Activated CD4-positive, alpha-beta memory T cell treated with anti-CD3 and anti-CD28 coated beads for 36 hours (primary cell): ENCODE measurements at regions of chr2 and their contacts with region 1.

Region 1: GRCh38 chr2:143110758-143111428 is 18.3 kb upstream of the ARHGAP15 start:
- DNase-seq: peak; percentile 70
- H3K4me3 Mint-ChIP-seq: peak overlapping the region; percentile 56
- H3K27ac Mint-ChIP-seq: peak overlapping the region; percentile 86
- H3K4me1 Mint-ChIP-seq: peaks cover 31% of the 10 kb centered on the region
- H3K27me3 Mint-ChIP-seq: no peaks in the 10 kb centered on the region

Region 2: GRCh38 chr2:143034292-143035074 is 76.4 kb before region 1 on chr2:
- CTCF ChIA-PET with region 1: interaction called, 23 read pairs
- POLR2A ChIA-PET with region 1: no interaction called
- intact Hi-C with region 1: loop called (anchors 1 kb)
- DNase-seq: peak; percentile 64
- H3K4me3 Mint-ChIP-seq: no peak overlapping the region
- H3K27ac Mint-ChIP-seq: no peak overlapping the region
- H3K4me1 Mint-ChIP-seq: peaks cover 8% of the 10 kb centered on the region
- H3K27me3 Mint-ChIP-seq: no peaks in the 10 kb centered on the region

Region 3: DNA sequence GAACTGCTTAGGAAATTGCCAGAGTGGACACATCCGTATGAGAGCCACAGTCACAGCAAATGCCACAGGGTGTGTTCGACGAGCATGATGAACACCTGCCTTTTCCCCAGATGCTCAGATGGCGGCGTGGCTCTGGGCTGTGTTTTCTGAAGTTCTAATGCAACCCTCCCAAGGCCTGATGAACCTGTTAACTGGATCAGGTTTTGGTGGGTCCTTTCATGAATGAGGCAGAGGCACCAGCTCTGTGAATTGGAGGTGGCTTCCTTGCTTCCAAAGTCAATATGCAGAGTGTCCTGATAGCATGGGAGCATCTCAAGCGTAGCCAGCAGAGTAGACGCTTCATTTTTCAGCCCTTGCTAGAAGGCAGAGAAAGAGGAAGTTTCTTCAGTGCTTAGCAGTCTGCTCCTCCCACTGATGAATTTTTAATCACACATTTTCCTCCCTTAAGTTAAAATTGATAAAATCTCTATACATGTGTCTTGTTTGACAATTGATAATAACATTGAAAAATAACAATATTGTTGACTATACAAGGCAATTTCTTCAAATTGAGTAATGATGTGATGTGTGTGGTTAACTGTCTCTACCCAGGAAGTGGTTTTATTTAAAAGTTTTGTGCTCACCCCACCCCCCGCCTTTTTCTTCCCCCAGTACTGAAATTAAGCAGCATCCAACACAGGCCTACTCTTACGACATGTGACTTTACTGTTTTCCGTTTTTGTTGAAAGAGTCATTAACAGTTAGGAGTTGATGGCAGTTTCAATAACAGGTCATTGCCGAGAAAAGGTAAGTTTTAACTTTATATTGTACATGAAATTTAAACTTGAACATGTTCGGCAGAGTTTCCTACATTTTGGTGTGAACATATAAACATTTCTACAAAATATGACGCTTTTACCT is 18.0 kb after region 1 on chr2 and contains the start of gene ARHGAP15:
- CTCF ChIA-PET with region 1: interaction called, 43 read pairs
- POLR2A ChIA-PET with region 1: interaction called, 3 read pairs
- intact Hi-C with region 1: loop called (anchors 1 kb)
- DNase-seq: peak; percentile 85
- H3K4me3 Mint-ChIP-seq: peak within 1 kb of the TSS; percentile 83
- H3K27ac Mint-ChIP-seq: peak within 1 kb of the TSS; percentile 100
- H3K4me1 Mint-ChIP-seq: peaks cover 29% of the 10 kb centered on the region
- H3K27me3 Mint-ChIP-seq: no peaks in the 10 kb centered on the region
- total RNA-seq, gene ARHGAP15: 70.2 to 71.2 TPM

Region 4: GRCh38 chr2:143205106-143205764 is 94.3 kb after region 1 on chr2:
- CTCF ChIA-PET with region 1: interaction called, 7 read pairs
- POLR2A ChIA-PET with region 1: no interaction called
- intact Hi-C with region 1: loop called (anchors 5 kb)
- DNase-seq: no peak
- H3K4me3 Mint-ChIP-seq: no peak overlapping the region
- H3K27ac Mint-ChIP-seq: peak overlapping the region; percentile 63
- H3K4me1 Mint-ChIP-seq: peaks cover 41% of the 10 kb centered on the region
- H3K27me3 Mint-ChIP-seq: no peaks in the 10 kb centered on the region

Region 5: DNA sequence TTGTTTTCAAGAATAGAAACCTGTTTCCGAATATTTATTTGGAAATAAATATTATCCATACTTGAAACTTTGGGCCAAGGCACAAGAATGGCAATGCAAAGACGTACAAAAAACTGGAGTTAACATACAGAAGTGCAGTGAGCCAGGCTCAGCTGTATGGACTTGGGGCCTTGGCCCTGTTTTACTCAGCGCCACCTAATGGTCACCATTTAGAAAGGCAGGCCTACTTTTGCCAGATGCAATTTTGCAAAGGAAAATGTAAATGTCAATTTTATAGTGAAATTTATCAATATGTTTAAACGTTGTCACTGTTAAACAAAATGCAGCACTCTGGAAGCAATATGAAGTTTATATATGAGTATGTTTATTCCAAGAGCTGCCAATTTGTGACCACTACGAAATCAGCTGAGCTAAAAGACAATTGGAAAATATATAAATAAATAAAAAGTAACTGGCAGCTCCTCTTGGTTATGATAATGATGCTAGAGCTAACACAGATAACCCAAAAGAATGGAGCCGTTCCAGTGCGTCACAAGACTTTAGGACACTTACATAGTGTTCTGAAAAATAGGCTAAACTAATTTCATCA is 173.3 kb after region 1 on chr2:
- CTCF ChIA-PET with region 1: interaction called, 28 read pairs
- POLR2A ChIA-PET with region 1: no interaction called
- intact Hi-C with region 1: no loop called
- DNase-seq: peak; percentile 38
- H3K4me3 Mint-ChIP-seq: no peak overlapping the region
- H3K27ac Mint-ChIP-seq: peak overlapping the region; percentile 3
- H3K4me1 Mint-ChIP-seq: peaks cover 55% of the 10 kb centered on the region
- H3K27me3 Mint-ChIP-seq: no peaks in the 10 kb centered on the region

Region 6: DNA sequence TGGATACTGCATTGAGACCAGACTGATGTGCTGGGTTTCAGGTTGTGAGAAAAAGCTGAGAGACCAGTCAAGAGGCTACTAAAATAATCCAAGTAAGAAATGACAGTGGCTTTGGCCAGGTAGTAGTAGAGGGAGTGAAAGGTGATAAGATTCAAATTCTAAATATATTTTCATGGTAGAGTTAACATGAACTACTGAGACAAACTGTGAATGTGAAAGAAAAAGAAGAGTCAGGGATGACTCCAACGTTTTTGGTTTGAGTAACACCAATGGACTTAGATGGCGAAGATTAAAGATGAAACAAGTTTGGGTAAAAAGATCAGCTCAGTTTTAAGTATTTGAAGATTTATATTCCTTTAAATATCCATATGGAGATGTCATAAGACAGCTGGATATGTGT is 1199.6 kb after region 1 on chr2:
- CTCF ChIA-PET with region 1: no interaction called
- POLR2A ChIA-PET with region 1: no interaction called
- intact Hi-C with region 1: no loop called
- DNase-seq: no peak
- H3K4me3 Mint-ChIP-seq: no peak overlapping the region
- H3K27ac Mint-ChIP-seq: no peak overlapping the region
- H3K4me1 Mint-ChIP-seq: peaks cover 21% of the 10 kb centered on the region
- H3K27me3 Mint-ChIP-seq: no peaks in the 10 kb centered on the region